ENCODE measurements at regions of chr11 and their contacts with region 1.

Region 1: GRCh38 chr11:65027213-65028067 is at the start of gene SNX15:
- DNase-seq: peak; percentile 99
- ATAC-seq: peak; percentile 95
- H3K4me3 ChIP-seq: peak within 1 kb of the TSS; percentile 67
- H3K27ac ChIP-seq: peak within 1 kb of the TSS; percentile 66
- H3K4me1 ChIP-seq: peaks cover 10% of the 10 kb centered on the region
- H3K27me3 ChIP-seq: no peaks in the 10 kb centered on the region
- CTCF ChIP-seq: peak; percentile 56
- total RNA-seq, gene SNX15: 15.1 and 40.4 TPM in 2 replicates

Region 2: DNA sequence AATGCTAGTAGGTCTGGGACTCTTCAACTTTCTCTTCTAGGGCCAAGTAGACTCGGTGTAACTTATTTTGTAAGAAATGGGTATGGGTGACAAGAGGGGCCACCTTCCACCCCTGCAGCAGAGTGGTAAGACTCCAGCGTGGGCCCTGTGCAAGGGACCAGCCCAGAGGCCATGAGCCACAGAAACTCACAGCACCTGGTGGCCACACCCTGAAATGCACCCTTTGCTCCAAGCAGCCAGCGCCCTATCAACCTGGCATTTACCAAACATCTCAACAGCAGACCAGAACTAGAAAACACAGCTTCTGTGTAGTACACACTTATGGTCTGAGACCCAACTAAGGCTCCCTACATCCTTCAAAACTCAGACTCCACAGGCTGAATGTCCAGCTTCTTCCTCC is 50.7 kb after region 1 on chr11:
- CTCF ChIA-PET with region 1: no interaction called
- POLR2A ChIA-PET with region 1: no interaction called
- intact Hi-C with region 1: loop called (anchors 1 kb)
- DNase-seq: peak; percentile 69
- ATAC-seq: peak; percentile 92
- H3K4me3 ChIP-seq: no peak overlapping the region
- H3K27ac ChIP-seq: no peak overlapping the region
- H3K4me1 ChIP-seq: peaks cover 12% of the 10 kb centered on the region
- H3K27me3 ChIP-seq: no peaks in the 10 kb centered on the region
- CTCF ChIP-seq: peak; percentile 77

Region 3: GRCh38 chr11:65111744-65112414 is 84.4 kb after region 1 on chr11 and contains the start of gene TM7SF2:
- CTCF ChIA-PET with region 1: no interaction called
- POLR2A ChIA-PET with region 1: no interaction called
- intact Hi-C with region 1: no loop called
- DNase-seq: peak; percentile 98
- ATAC-seq: peak; percentile 81
- H3K4me3 ChIP-seq: peak within 1 kb of the TSS; percentile 73
- H3K27ac ChIP-seq: no peak within 1 kb of the TSS
- H3K4me1 ChIP-seq: peaks cover 21% of the 10 kb centered on the region
- H3K27me3 ChIP-seq: no peaks in the 10 kb centered on the region
- CTCF ChIP-seq: no peak
- total RNA-seq, gene TM7SF2: 38.4 and 44.2 TPM in 2 replicates